Astrocyte of the cerebellum (primary cell): ENCODE measurements at regions of chr10 and their contacts with region 1.

Region 1: GRCh38 chr10:90745563-90745962 is 112.3 kb downstream of the HTR7 start:
- DNase-seq: no peak
- H3K4me3 ChIP-seq: no peak overlapping the region
- CTCF ChIP-seq: no peak

Region 2: GRCh38 chr10:90779548-90779947 is 34.0 kb after region 1 on chr10:
- in situ Hi-C with region 1: no loop called
- DNase-seq: no peak
- H3K4me3 ChIP-seq: no peak overlapping the region
- CTCF ChIP-seq: peak; percentile 28

Region 3: GRCh38 chr10:90842725-90843124 is 97.2 kb after region 1 on chr10:
- in situ Hi-C with region 1: loop called (anchors 5 kb)
- DNase-seq: no peak
- H3K4me3 ChIP-seq: no peak overlapping the region
- CTCF ChIP-seq: no peak

Region 4: GRCh38 chr10:90857635-90858460 is 112.3 kb after region 1 on chr10 and contains the start of gene HTR7:
- in situ Hi-C with region 1: no loop called
- DNase-seq: no peak
- H3K4me3 ChIP-seq: peak within 1 kb of the TSS; percentile 60
- CTCF ChIP-seq: peak; percentile 54